ENCODE measurements at regions of chr11 and their contacts with region 1.

Region 1: DNA sequence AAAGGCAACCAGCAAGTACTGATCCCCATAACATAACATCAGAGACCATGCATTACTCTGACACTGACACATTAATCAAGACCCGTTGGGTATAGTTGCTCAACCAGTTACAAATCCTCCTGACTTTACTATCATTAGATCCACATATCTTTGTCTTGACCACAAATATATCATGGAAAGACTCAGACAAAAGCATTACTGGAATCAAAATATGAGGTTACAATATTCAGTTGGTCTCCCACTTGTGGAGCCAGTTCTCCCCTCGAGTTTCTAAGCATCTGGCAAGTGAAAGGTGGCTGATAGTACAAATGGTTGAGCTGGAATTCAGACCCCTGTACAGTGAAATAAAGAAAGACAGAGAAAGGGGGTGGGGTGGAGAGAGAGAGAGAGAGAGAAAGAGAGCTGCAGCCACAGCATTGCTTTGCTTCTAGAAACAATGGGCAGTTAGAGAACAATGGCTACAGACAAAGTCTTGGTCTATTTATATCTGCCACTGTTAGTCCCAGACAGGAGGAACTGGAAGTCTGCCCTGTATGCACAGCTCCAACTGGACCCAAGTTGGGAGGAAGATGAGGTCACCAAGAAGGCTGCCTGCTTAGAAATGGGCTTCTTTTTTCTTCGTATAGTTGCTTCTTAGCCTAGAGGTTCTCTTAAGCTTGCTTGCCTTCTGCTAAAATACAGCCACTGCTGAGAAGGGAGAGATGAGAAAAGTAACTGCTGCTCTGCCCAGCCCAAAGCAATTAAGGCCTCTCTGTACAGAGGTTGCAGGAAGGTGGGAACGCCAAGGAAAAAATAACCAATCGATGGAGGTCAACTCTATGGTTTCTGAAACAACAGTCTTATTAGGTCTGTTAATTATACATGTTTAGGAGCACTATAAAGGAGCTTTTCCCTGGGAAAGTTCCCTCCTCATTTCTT is 85.5 kb downstream of the ETS1 start:
- DNase-seq: no peak
- H3K4me3 ChIP-seq: peak overlapping the region; percentile 37
- H3K4me3 Mint-ChIP-seq: peak overlapping the region; percentile 82 to 99 (median 90)
- H3K27ac ChIP-seq: no peak overlapping the region
- H3K27ac Mint-ChIP-seq: peak overlapping the region; percentile 88 to 99 (median 98)
- H3K4me1 ChIP-seq: peaks cover 100% of the 10 kb centered on the region
- H3K4me1 Mint-ChIP-seq: peaks cover 97 to 100% (median 99%) of the 10 kb centered on the region in 3 donors
- H3K27me3 ChIP-seq: no peaks in the 10 kb centered on the region
- H3K27me3 Mint-ChIP-seq: peaks cover 0 to 2% of the 10 kb centered on the region in 2 donors

Region 2: GRCh38 chr11:128512474-128512996 is 10.6 kb after region 1 on chr11:
- CTCF ChIA-PET with region 1: interaction called, 22 read pairs
- POLR2A ChIA-PET with region 1: interaction called, 33 read pairs
- DNase-seq: peak in 3 of 5 donors; percentile 48 to 66 (median 62)
- H3K4me3 ChIP-seq: peak overlapping the region; percentile 97
- H3K4me3 Mint-ChIP-seq: peak overlapping the region; percentile 95 to 100 (median 98)
- H3K27ac ChIP-seq: peak overlapping the region; percentile 28
- H3K27ac Mint-ChIP-seq: peak overlapping the region; percentile 90 to 99 (median 98)
- H3K4me1 ChIP-seq: peaks cover 75% of the 10 kb centered on the region
- H3K4me1 Mint-ChIP-seq: peaks cover 91 to 95% (median 93%) of the 10 kb centered on the region in 3 donors
- H3K27me3 ChIP-seq: no peaks in the 10 kb centered on the region
- H3K27me3 Mint-ChIP-seq: no peaks in the 10 kb centered on the region

Measured in CD8-positive, alpha-beta memory T cell (primary cell).